T-cell (primary cell): ENCODE measurements at regions of chr19 and their contacts with region 1.

Region 1: GRCh38 chr19:48993175-48994034 is at the starts of genes GYS1 and RUVBL2:
- DNase-seq: peak; percentile 97 to 100 (median 99)
- ATAC-seq: peak; percentile 89 to 96 (median 94)
- H3K4me3 ChIP-seq: peak within 1 kb of the TSS; percentile 84 to 95
- H3K4me3 Mint-ChIP-seq: peak within 1 kb of the TSS; percentile 92 to 95 (median 94)
- H3K27ac ChIP-seq: peak within 1 kb of the TSS; percentile 86
- H3K27ac Mint-ChIP-seq: peak within 1 kb of the TSS; percentile 92 to 95
- H3K4me1 ChIP-seq: peaks cover 3 to 41% of the 10 kb centered on the region in 2 experiments
- H3K4me1 Mint-ChIP-seq: peaks cover 40 to 54% (median 46%) of the 10 kb centered on the region in 3 donors
- H3K27me3 ChIP-seq: no peaks in the 10 kb centered on the region
- H3K27me3 Mint-ChIP-seq: no peaks in the 10 kb centered on the region
- total RNA-seq, gene GYS1: 28.1 to 58.9 (median 52.4) TPM
- total RNA-seq, gene RUVBL2: 20.3 to 48.7 (median 41.4) TPM

Region 2: DNA sequence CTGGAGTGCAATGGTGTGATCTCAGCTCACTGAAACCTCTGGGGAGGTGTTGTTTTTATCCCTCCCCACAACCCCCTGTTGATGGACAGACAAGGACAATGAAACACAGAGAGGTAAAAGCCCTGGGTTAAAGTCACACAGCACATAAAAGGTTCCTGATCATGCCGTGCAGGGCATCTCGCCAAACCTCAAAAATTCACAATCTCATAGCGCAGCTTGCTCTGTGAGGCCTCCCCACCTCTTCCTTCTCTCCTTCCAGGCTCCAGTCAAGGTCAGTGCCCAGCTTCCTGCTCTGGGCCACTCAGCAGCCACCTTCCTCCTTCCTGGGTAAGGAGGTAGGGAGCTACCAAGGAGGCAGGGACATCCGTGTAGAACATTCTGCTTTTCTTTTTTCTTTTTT is 295.4 kb before region 1 on chr19:
- CTCF ChIA-PET with region 1: no interaction called
- POLR2A ChIA-PET with region 1: no interaction called
- DNase-seq: no peak
- ATAC-seq: no peak
- H3K4me3 ChIP-seq: no peak overlapping the region
- H3K4me3 Mint-ChIP-seq: peak overlapping the region in 1 of 3 donors; percentile 26
- H3K27ac ChIP-seq: no peak overlapping the region
- H3K27ac Mint-ChIP-seq: no peak overlapping the region
- H3K4me1 ChIP-seq: peaks cover 0 to 11% of the 10 kb centered on the region in 2 experiments
- H3K4me1 Mint-ChIP-seq: peaks cover 12 to 13% (median 13%) of the 10 kb centered on the region in 3 donors
- H3K27me3 ChIP-seq: peaks cover 0 to 36% of the 10 kb centered on the region in 2 experiments
- H3K27me3 Mint-ChIP-seq: peaks cover 3 to 17% of the 10 kb centered on the region in 2 donors

Region 3: DNA sequence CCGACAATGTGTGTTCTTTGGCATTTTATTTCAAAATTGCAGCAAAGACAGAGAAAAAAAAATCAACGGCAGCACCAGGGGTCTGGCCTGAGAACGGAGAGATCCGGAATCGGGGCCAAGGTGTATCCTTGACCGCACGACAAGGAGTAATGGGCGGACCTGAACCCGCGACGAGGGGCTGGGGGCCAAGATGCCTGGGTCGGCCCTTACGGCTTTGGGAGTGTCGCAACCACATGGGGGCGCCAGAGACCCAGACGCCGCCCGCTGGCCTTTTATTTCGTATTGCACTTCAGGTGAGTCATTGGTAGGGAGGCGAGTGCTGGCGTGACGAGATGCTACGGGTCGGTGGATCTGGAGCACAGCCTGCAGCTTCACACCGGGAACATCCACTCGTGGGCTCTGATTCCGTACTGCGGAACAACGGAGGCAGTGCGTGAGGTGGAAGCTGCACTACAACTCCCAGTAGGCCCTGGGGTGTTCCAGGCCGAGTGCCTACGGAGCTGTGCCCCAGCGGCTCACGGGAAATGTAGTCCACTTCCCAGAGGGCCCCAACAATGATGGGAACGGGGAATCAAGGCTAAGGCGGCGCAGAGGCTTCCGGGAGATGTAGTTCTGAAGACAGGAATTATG is 198.2 kb before region 1 on chr19:
- CTCF ChIA-PET with region 1: interaction called, 3 to 11 read pairs
- POLR2A ChIA-PET with region 1: no interaction called
- DNase-seq: peak; percentile 65 to 91 (median 76)
- ATAC-seq: peak; percentile 98 to 99 (median 98)
- H3K4me3 ChIP-seq: peak overlapping the region; percentile 56 to 87
- H3K4me3 Mint-ChIP-seq: peak overlapping the region; percentile 79 to 90 (median 86)
- H3K27ac ChIP-seq: peak overlapping the region; percentile 66
- H3K27ac Mint-ChIP-seq: peak overlapping the region; percentile 91 to 94
- H3K4me1 ChIP-seq: peaks cover 0 to 14% of the 10 kb centered on the region in 2 experiments
- H3K4me1 Mint-ChIP-seq: peaks cover 5 to 12% (median 9%) of the 10 kb centered on the region in 3 donors
- H3K27me3 ChIP-seq: no peaks in the 10 kb centered on the region
- H3K27me3 Mint-ChIP-seq: no peaks in the 10 kb centered on the region

Region 4: DNA sequence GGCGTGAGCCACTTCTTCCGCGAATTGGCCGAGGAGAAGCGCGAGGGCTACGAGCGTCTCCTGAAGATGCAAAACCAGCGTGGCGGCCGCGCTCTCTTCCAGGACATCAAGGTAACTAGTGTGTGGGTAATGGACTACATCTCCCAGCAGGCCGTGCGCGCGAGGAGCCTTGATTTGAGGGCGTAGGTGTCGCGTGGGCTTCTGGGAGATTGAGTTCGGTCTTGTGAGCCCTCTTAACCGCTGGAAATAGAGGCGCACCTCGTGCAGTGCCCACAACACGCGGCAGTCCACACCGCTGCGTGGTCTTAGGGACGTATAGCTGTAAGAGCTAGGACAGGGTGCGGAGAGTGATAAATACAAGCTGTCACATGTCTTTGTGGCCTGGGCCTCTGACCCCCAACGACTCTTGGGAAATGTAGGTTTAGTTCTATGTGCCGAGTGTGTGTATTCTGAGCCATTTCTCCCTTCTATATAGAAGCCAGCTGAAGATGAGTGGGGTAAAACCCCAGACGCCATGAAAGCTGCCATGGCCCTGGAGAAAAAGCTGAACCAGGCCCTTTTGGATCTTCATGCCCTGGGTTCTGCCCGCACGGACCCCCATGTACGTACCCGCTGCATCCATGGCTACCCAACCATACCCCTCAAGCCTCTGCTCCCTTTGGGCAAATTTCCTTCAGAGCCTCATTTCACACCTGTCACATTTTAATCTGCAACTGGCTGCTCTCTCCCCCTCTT is 27.4 kb before region 1 on chr19:
- CTCF ChIA-PET with region 1: interaction called, 3 to 10 read pairs
- POLR2A ChIA-PET with region 1: interaction called in 1 of 2 experiments, 5 read pairs
- DNase-seq: peak; percentile 78 to 95 (median 89)
- ATAC-seq: peak; percentile 63 to 77 (median 69)
- H3K4me3 ChIP-seq: peak overlapping the region; percentile 80 to 81
- H3K4me3 Mint-ChIP-seq: peak overlapping the region; percentile 98 to 100 (median 100)
- H3K27ac ChIP-seq: peak overlapping the region; percentile 64
- H3K27ac Mint-ChIP-seq: peak overlapping the region; percentile 99 to 100
- H3K4me1 ChIP-seq: peaks cover 22 to 58% of the 10 kb centered on the region in 2 experiments
- H3K4me1 Mint-ChIP-seq: peaks cover 58 to 71% (median 62%) of the 10 kb centered on the region in 3 donors
- H3K27me3 ChIP-seq: no peaks in the 10 kb centered on the region
- H3K27me3 Mint-ChIP-seq: no peaks in the 10 kb centered on the region

Region 5: GRCh38 chr19:48975947-48976847 is 17.2 kb before region 1 on chr19:
- CTCF ChIA-PET with region 1: interaction called in 1 of 2 experiments, 10 read pairs
- POLR2A ChIA-PET with region 1: interaction called in 1 of 2 experiments, 4 read pairs
- DNase-seq: peak in 22 of 35 experiments; percentile 24 to 53 (median 42)
- ATAC-seq: peak; percentile 65 to 83 (median 76)
- H3K4me3 ChIP-seq: no peak overlapping the region
- H3K4me3 Mint-ChIP-seq: no peak overlapping the region
- H3K27ac ChIP-seq: no peak overlapping the region
- H3K27ac Mint-ChIP-seq: no peak overlapping the region
- H3K4me1 ChIP-seq: no peaks in the 10 kb centered on the region
- H3K4me1 Mint-ChIP-seq: peaks cover under 1% of the 10 kb centered on the region in 3 donors
- H3K27me3 ChIP-seq: no peaks in the 10 kb centered on the region
- H3K27me3 Mint-ChIP-seq: no peaks in the 10 kb centered on the region

Region 6: DNA sequence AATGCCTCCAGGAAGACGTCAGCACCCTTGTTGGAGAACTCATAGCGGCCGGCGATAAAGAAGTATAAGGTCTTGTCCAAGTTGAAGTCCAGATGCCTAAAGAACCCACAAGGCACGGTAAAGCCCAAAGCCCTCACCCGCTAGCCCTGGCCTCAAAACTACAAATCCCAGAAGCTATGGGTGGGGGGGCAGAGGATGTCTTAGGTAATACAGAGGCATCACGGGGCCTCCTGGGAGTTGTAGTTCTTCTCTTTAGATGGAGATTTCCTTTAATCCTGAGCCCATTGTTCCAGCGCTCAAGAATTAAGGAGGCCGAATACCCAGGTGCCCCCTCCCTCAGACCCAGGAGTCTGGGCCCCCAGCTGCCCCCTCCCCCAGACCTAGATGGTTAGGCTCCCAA is 11.1 kb before region 1 on chr19:
- CTCF ChIA-PET with region 1: interaction called in 1 of 2 experiments, 16 read pairs
- POLR2A ChIA-PET with region 1: interaction called in 1 of 2 experiments, 3 read pairs
- DNase-seq: no peak
- ATAC-seq: no peak
- H3K4me3 ChIP-seq: no peak overlapping the region
- H3K4me3 Mint-ChIP-seq: no peak overlapping the region
- H3K27ac ChIP-seq: no peak overlapping the region
- H3K27ac Mint-ChIP-seq: no peak overlapping the region
- H3K4me1 ChIP-seq: no peaks in the 10 kb centered on the region
- H3K4me1 Mint-ChIP-seq: peaks cover 0 to under 1% (median 0%) of the 10 kb centered on the region in 3 donors
- H3K27me3 ChIP-seq: no peaks in the 10 kb centered on the region
- H3K27me3 Mint-ChIP-seq: no peaks in the 10 kb centered on the region

Region 7: DNA sequence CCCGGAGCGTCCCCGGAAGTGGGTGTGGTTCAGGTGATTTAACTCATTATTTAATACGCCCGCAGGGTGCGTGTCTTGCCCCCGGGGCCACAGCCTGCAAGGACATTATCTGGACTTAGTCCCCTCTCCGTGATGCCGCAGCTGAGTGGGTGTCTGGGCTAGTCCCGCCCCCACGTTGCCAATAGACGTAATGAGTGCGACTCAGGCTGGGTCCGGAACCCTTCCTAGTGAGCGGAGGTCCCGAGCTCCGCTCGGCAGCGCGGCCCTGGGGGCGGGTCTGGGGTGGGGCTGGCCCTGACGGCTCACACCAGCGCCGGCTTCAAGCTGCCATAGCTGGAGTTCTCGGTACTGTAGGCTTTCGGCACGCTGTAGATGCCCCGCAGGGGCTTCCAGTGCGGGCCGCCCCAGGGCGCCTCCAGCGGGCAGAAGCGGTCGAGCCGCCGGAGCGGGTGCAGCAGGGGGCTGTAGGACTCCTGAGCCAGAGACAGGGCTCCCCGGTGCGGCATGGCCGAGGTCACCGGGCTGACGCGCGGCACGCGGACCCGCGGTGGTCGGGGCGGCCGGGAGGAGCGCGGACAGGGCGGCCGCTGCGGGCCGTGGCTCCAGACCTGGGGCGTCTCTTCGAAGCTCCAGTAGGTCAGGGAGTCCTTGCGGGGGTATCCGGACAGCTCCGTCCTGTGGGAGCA is 24.4 kb after region 1 on chr19:
- CTCF ChIA-PET with region 1: interaction called in 1 of 2 experiments, 15 read pairs
- POLR2A ChIA-PET with region 1: interaction called in 1 of 2 experiments, 6 read pairs
- DNase-seq: peak; percentile 40 to 77 (median 64)
- ATAC-seq: peak; percentile 85 to 87 (median 86)
- H3K4me3 ChIP-seq: peak overlapping the region; percentile 64 to 68
- H3K4me3 Mint-ChIP-seq: peak overlapping the region; percentile 83 to 95 (median 86)
- H3K27ac ChIP-seq: peak overlapping the region; percentile 49
- H3K27ac Mint-ChIP-seq: peak overlapping the region in 1 of 2 donors; percentile 28
- H3K4me1 ChIP-seq: peaks cover 7 to 33% of the 10 kb centered on the region in 2 experiments
- H3K4me1 Mint-ChIP-seq: peaks cover 19 to 32% (median 25%) of the 10 kb centered on the region in 3 donors
- H3K27me3 ChIP-seq: peaks cover 0 to 15% of the 10 kb centered on the region in 2 experiments
- H3K27me3 Mint-ChIP-seq: peaks cover 0 to 6% of the 10 kb centered on the region in 2 donors

Region 8: DNA sequence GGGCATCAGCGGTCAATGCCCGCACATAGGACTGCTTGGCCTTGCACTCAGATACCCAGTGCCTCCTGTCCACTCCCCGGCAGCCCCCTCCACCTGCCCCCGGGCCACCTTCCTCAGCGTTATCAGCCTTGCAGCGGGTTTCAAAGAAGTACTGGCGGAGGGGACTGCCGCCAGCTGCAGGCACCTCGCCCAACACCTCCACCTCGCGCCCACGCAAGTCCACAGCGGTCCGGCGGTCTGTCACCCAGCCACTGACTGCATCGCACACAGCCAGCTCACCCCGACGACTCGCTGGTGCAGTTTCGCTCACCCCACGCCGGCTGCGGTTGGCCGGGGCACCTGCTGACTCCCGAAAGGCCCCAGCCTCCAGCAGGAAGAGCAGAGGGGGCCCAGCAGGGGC is 68.0 kb after region 1 on chr19:
- CTCF ChIA-PET with region 1: no interaction called
- POLR2A ChIA-PET with region 1: no interaction called
- DNase-seq: no peak
- ATAC-seq: no peak
- H3K4me3 ChIP-seq: no peak overlapping the region
- H3K4me3 Mint-ChIP-seq: no peak overlapping the region
- H3K27ac ChIP-seq: no peak overlapping the region
- H3K27ac Mint-ChIP-seq: no peak overlapping the region
- H3K4me1 ChIP-seq: peaks cover 5 to 24% of the 10 kb centered on the region in 2 experiments
- H3K4me1 Mint-ChIP-seq: peaks cover 18 to 24% (median 20%) of the 10 kb centered on the region in 3 donors
- H3K27me3 ChIP-seq: peaks cover 0 to 91% of the 10 kb centered on the region in 2 experiments
- H3K27me3 Mint-ChIP-seq: peaks cover 30 to 66% of the 10 kb centered on the region in 2 donors

Region 9: DNA sequence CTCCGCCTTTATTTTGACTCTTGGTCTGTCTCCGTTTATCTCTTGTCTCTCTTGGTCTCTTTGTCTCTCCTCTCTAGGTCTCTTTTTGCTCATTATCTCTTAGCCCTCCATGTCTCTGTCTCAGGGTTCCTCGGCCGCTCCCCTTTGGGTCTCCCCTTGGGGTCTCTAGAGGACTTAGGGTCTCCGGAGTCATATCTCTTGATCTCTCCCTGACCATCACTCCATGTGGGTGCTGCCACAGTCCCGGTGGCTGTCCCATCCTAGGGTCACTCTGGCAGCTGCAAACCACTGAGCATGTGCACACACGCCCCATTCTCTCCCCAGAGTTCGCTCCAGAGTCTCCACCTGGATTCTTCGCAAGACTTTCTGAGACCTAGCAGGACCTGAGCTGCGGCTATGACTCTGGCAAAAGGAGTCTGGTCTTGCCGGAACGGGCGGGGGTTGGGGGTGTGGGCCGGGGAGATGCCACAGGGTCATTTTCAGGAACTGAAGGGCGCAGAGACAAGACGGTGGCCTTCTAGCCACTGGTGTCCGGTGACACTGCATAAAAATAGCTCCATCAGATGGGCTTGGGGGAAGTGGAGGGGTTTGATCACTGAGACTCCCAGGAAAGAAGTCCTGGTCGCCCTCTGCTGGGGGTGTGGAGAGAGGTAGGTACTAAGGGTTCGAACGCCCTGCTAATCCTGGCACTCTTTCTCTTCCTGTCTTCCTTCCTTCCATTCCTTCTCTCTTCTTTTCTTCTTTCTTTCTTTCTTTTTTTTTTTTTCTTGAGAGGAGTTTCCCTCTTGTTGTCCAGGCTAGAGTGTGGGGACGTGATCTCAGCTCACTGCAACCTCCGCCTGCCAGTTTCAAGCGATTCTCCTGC is 80.3 kb after region 1 on chr19:
- CTCF ChIA-PET with region 1: no interaction called
- POLR2A ChIA-PET with region 1: no interaction called
- DNase-seq: no peak
- ATAC-seq: no peak
- H3K4me3 ChIP-seq: no peak overlapping the region
- H3K4me3 Mint-ChIP-seq: peak overlapping the region in 2 of 3 donors; percentile 14 to 74
- H3K27ac ChIP-seq: no peak overlapping the region
- H3K27ac Mint-ChIP-seq: no peak overlapping the region
- H3K4me1 ChIP-seq: peaks cover 0 to 12% of the 10 kb centered on the region in 2 experiments
- H3K4me1 Mint-ChIP-seq: peaks cover 10 to 17% (median 12%) of the 10 kb centered on the region in 3 donors
- H3K27me3 ChIP-seq: peaks cover 5 to 78% of the 10 kb centered on the region in 2 experiments
- H3K27me3 Mint-ChIP-seq: peaks cover 53 to 70% of the 10 kb centered on the region in 2 donors

Region 10: DNA sequence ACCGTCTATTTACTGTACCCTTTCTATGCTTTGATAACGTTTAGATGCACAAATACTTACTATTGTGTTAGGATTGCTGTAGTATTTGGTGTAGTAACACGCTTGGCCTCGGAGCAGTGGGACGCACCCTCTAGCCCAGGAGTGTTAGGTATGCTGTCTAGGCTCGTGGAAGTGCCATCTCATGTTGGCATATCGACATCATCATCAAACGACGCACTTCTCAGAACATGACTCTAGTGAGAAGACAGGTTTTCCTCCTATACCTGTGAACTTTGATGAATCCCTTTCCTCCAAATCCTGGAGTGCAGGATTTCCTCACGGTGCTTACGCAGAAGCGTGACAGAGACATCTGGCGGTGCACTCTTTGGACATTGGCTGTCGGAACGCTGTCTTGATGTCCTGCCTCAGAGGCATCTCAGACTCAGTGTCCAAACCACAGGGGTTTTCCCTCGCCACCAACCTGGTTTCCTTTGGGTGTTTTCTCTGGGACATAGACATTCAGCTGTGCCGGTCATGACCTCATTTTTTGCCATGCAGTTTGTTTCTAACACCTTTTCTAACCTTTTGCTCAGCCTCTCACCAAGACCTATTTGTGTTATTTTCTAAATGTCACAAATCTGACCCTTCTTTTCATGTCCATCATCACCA is 98.1 kb after region 1 on chr19:
- CTCF ChIA-PET with region 1: no interaction called
- POLR2A ChIA-PET with region 1: no interaction called
- DNase-seq: no peak
- ATAC-seq: no peak
- H3K4me3 ChIP-seq: no peak overlapping the region
- H3K4me3 Mint-ChIP-seq: no peak overlapping the region
- H3K27ac ChIP-seq: no peak overlapping the region
- H3K27ac Mint-ChIP-seq: no peak overlapping the region
- H3K4me1 ChIP-seq: peaks cover 3 to 29% of the 10 kb centered on the region in 2 experiments
- H3K4me1 Mint-ChIP-seq: peaks cover 32 to 40% (median 37%) of the 10 kb centered on the region in 3 donors
- H3K27me3 ChIP-seq: no peaks in the 10 kb centered on the region
- H3K27me3 Mint-ChIP-seq: no peaks in the 10 kb centered on the region

Region 11: DNA sequence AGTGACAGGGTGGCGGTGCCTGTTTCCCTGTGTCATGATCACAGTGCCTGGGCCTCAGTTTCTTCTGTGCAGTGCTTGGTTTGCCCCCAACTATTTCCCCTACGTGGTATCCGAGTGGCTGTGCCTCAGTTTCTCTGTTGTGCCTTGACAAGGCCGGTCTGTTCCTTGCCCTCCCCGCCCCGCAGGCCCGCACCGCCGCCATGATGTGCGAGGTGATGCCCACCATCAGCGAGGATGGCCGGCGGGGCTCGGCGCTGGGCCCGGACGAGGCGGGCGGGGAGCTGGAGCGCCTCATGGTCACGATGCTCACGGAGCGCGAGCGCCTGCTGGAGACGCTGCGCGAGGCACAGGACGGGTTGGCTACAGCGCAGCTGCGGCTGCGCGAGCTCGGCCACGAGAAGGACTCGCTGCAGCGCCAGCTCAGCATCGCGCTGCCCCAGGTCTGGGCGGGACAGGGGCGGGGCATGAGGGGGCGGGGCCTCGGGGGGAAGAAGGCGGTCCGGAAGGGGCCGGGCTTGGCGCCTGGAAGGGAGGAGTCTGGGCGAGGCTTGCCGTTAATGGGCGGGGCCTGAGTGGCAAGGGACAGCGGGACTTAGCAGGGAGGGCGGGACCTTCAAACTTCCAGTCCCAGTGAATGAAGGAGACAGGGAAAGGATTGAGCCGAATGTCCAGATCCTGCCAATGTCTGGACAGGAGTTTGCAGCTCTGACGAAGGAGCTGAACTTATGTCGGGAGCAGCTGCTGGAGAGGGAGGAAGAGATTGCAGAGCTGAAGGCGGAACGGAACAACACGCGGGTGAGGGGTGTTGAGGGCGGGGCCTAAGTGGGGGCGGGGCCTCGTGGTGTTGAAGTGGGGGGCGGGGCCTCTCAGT is 134.5 kb after region 1 on chr19:
- CTCF ChIA-PET with region 1: interaction called in 1 of 2 experiments, 14 read pairs
- POLR2A ChIA-PET with region 1: interaction called in 1 of 2 experiments, 3 read pairs
- DNase-seq: peak; percentile 81 to 96 (median 90)
- ATAC-seq: peak; percentile 92 to 97 (median 94)
- H3K4me3 ChIP-seq: peak overlapping the region; percentile 35 to 41
- H3K4me3 Mint-ChIP-seq: peak overlapping the region; percentile 78 to 85 (median 78)
- H3K27ac ChIP-seq: no peak overlapping the region
- H3K27ac Mint-ChIP-seq: peak overlapping the region; percentile 73 to 77
- H3K4me1 ChIP-seq: peaks cover 0 to 15% of the 10 kb centered on the region in 2 experiments
- H3K4me1 Mint-ChIP-seq: peaks cover 15 to 20% (median 17%) of the 10 kb centered on the region in 3 donors
- H3K27me3 ChIP-seq: peaks cover 0 to 4% of the 10 kb centered on the region in 2 experiments
- H3K27me3 Mint-ChIP-seq: no peaks in the 10 kb centered on the region